Activated naive CD4-positive, alpha-beta T cell treated with anti-CD3 and anti-CD28 coated beads for 36 hours (primary cell): ENCODE measurements at regions of chr17 and their contacts with region 1.

Region 1: DNA sequence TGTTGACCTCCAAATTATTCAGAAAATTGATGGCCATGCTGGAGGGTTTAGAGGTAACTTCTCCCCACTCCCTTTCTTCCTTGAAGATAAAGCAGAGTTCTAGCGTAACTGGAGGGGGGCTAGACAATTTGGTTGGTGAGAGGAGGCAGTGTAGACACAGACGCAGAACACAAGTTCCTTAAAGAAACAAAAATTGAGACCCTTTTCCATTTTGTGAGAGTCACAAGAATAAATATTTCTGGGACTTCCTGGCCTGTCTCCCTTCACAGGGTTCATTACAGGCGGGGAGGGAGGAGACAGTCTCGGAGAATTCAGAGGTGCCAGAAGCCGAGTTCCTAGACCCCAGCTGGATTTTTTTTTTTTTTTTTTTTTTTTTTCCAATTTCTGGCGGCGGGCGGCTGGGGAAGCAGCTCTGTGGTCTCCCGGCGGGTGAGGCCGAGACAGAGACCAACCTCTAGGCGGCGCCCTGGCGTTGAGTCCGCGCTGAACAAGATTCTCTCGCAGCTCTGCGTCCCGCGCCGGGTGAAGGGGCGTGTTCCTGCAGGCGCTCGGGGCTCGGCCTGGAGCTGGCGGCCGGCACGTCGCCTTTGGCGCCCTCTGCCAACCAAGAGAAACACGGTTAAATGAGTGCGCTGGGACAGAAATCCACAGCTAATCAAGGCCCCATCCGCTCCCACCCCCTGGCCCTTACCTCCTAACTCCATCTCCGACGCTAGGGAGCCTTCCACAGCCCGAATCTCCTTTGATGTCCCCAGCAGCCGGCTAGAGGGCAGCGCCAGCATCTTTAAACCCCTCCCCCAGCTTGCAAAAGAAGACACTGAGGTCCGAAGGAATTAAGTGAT is 10.2 kb upstream of the HOXB9 start:
- DNase-seq: peak; percentile 85
- H3K4me3 Mint-ChIP-seq: peak overlapping the region; percentile 22
- H3K27ac Mint-ChIP-seq: no peak overlapping the region
- H3K4me1 Mint-ChIP-seq: peaks cover 10% of the 10 kb centered on the region
- H3K27me3 Mint-ChIP-seq: peaks cover 89% of the 10 kb centered on the region

Region 2: GRCh38 chr17:48357779-48358602 is 278.4 kb before region 1 on chr17:
- CTCF ChIA-PET with region 1: no interaction called
- intact Hi-C with region 1: no loop called
- DNase-seq: no peak
- H3K4me3 Mint-ChIP-seq: no peak overlapping the region
- H3K27ac Mint-ChIP-seq: no peak overlapping the region
- H3K4me1 Mint-ChIP-seq: peaks cover 9% of the 10 kb centered on the region
- H3K27me3 Mint-ChIP-seq: no peaks in the 10 kb centered on the region

Region 3: GRCh38 chr17:48392857-48393256 is 243.5 kb before region 1 on chr17:
- CTCF ChIA-PET with region 1: no interaction called
- intact Hi-C with region 1: no loop called
- DNase-seq: no peak
- H3K4me3 Mint-ChIP-seq: no peak overlapping the region
- H3K27ac Mint-ChIP-seq: no peak overlapping the region
- H3K4me1 Mint-ChIP-seq: peaks cover 45% of the 10 kb centered on the region
- H3K27me3 Mint-ChIP-seq: no peaks in the 10 kb centered on the region

Region 4: GRCh38 chr17:48625495-48626244 is 10.7 kb before region 1 on chr17:
- CTCF ChIA-PET with region 1: interaction called, 29 read pairs
- intact Hi-C with region 1: loop called (anchors 1 kb)
- DNase-seq: peak; percentile 55
- H3K4me3 Mint-ChIP-seq: peak overlapping the region; percentile 86
- H3K27ac Mint-ChIP-seq: no peak overlapping the region
- H3K4me1 Mint-ChIP-seq: peaks cover 7% of the 10 kb centered on the region
- H3K27me3 Mint-ChIP-seq: peaks cover 71% of the 10 kb centered on the region

Region 5: DNA sequence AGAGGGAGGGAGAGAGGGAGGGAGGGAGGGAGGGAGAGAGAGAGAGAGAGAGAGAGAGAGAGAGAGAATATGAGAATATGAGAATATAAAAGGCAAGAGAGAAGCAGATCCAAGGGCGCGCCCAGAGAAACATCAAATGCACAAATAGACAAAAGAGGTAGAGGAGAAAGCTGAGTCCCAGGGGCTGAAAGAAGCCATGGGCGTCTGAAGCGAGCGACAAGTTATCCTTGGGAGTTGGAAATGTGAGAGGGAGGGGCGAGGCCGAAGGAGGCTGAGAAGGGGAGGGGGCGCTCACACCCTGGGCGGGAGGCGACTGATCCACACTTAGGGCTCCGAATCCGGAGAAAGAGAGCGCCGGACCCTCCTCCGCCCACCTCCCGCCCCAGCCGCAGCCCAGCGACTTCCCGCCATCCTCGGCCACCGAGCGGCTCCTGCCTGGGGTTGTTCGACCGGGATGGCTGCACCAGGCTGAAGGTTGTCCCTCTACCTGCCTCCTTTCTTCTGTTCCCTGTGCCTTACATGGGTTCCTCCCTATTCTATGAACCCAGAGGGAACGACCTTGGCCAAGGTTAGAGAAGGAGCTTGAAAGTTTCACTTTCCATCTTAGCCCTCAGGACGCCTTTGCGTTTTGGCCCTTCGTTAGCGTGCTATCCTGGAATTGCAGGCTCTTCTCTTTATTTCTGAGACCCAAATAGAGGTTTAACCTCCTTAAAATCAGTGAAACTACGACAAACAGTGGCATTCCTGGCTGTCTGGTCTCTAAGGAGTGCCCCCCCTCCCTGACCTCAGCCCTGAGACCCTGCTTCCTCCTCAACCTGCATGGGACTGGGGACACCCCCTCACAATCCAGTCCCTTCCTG is 10.9 kb after region 1 on chr17:
- CTCF ChIA-PET with region 1: interaction called, 10 read pairs
- intact Hi-C with region 1: no loop called
- DNase-seq: no peak
- H3K4me3 Mint-ChIP-seq: peak overlapping the region; percentile 69
- H3K27ac Mint-ChIP-seq: no peak overlapping the region
- H3K4me1 Mint-ChIP-seq: peaks cover 20% of the 10 kb centered on the region
- H3K27me3 Mint-ChIP-seq: peaks cover 62% of the 10 kb centered on the region

Region 6: GRCh38 chr17:48701864-48702532 is 65.6 kb after region 1 on chr17:
- CTCF ChIA-PET with region 1: no interaction called
- intact Hi-C with region 1: no loop called
- DNase-seq: no peak
- H3K4me3 Mint-ChIP-seq: no peak overlapping the region
- H3K27ac Mint-ChIP-seq: no peak overlapping the region
- H3K4me1 Mint-ChIP-seq: no peaks in the 10 kb centered on the region
- H3K27me3 Mint-ChIP-seq: peaks cover 44% of the 10 kb centered on the region

Region 7: GRCh38 chr17:48825446-48826381 is 189.3 kb after region 1 on chr17:
- CTCF ChIA-PET with region 1: no interaction called
- intact Hi-C with region 1: no loop called
- DNase-seq: no peak
- H3K4me3 Mint-ChIP-seq: no peak overlapping the region
- H3K27ac Mint-ChIP-seq: no peak overlapping the region
- H3K4me1 Mint-ChIP-seq: peaks cover 11% of the 10 kb centered on the region
- H3K27me3 Mint-ChIP-seq: peaks cover 7% of the 10 kb centered on the region